AG04450 (cell line): ENCODE measurements at regions of chr22 and their contacts with region 1.

Region 1: GRCh38 chr22:49936018-49936952 is 17.9 kb downstream of the CRELD2 start:
- DNase-seq: peak; percentile 24
- H3K4me3 ChIP-seq: peak overlapping the region; percentile 22; the same call in 1 of the 2 replicates
- H3K27ac ChIP-seq: peak overlapping the region; percentile 39
- H3K27me3 ChIP-seq: no peaks in the 10 kb centered on the region
- CTCF ChIP-seq: no peak

Region 2: DNA sequence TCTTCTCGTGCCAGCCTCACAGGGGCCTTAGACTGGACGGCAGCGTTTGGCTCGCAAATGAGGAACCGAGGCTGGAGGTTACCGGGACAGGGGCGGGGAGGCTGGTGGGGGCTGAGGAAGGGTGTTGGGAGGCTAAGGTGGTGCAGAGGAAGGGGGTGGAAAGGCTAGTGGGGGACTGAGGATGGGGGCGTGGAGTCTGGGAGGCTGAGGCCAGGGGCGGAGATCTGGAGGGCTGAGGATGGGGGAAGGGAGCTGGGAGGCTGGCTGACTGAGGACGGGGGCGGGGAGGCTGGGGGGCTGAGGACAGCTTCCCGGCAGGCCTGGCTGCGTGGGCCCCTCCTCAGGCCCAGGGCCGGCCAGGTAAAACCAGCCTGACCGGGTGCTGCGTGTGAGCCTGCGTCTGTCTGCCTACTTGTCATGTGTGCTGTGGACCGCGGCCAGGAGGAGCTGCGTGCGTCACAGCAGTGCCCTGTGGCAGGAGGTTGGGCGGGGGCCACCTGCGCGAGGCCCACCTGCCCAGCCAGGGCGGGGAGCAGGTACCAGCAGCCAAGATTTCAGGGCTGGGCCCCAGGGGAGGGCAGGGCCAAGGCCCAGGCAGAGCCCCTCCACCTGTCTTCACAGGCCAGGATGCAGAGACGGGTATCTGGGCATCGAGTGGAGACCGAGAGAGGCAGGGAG is 14.9 kb after region 1 on chr22:
- CTCF ChIA-PET with region 1: no interaction called
- POLR2A ChIA-PET with region 1: interaction called, 18 read pairs
- DNase-seq: no peak
- H3K4me3 ChIP-seq: no peak overlapping the region
- H3K27ac ChIP-seq: no peak overlapping the region
- H3K27me3 ChIP-seq: no peaks in the 10 kb centered on the region
- CTCF ChIP-seq: no peak

Region 3: GRCh38 chr22:49960159-49961004 is 24.1 kb after region 1 on chr22 and contains the start of gene PIM3:
- CTCF ChIA-PET with region 1: no interaction called
- POLR2A ChIA-PET with region 1: interaction called, 20 read pairs
- DNase-seq: peak; percentile 85
- H3K4me3 ChIP-seq: peak within 1 kb of the TSS; percentile 82
- H3K27ac ChIP-seq: peak within 1 kb of the TSS; percentile 52
- H3K27me3 ChIP-seq: no peaks in the 10 kb centered on the region
- CTCF ChIP-seq: no peak
- polyA plus RNA-seq, gene PIM3: 6.1 and 8.2 TPM in 2 replicates

Region 4: DNA sequence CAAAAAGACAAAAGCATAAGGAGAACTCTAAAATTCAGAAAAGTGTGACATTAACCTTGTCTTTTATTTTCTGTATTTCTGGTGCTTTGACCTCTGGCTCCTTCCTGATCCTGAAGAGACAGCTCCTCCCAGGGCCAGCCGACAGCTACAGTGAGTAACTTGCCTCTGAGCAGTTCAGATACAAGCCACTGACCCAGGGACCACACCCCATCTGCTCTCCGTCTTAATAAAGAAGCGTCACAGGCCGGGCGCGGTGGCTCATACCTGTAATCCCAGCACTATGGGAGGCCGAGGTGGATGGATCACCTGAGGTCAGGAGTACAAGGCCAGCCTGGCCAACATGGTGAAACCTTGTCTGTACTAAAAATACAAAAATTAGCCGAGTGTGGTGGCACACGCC is 142.5 kb after region 1 on chr22:
- CTCF ChIA-PET with region 1: no interaction called
- POLR2A ChIA-PET with region 1: interaction called, 12 read pairs
- DNase-seq: no peak
- H3K4me3 ChIP-seq: no peak overlapping the region
- H3K27ac ChIP-seq: no peak overlapping the region
- H3K27me3 ChIP-seq: peaks cover 6% of the 10 kb centered on the region
- CTCF ChIP-seq: no peak